ENCODE measurements at regions of chr12 and their contacts with region 1.

Region 1: GRCh38 chr12:9588749-9589148 is 19.0 kb downstream of the KLRB1 start:
- DNase-seq: no peak
- ATAC-seq: no peak
- H3K4me3 ChIP-seq: no peak overlapping the region
- H3K27ac ChIP-seq: no peak overlapping the region
- H3K4me1 ChIP-seq: no peaks in the 10 kb centered on the region
- H3K27me3 ChIP-seq: no peaks in the 10 kb centered on the region
- CTCF ChIP-seq: no peak
- POLR2A ChIP-seq: no peak
- RAD21 ChIP-seq: no peak

Region 2: DNA sequence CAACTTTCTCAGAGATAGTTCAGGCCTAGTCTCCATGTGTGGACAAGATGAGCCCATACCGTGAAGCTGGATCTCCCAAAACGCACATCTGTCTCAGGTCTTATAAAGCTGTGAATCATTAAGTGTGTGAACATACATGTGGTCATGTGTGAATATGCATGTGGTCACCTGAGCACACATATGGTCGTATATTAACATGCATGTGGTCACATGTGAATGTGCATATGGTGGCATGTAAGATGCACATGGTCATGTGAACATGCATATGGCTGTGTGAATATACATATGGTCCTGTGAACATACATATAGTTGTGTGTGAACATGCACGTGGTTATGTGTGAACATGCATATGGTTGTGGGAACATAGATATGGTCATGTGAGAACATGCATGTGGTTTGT is 208.1 kb before region 1 on chr12:
- CTCF ChIA-PET with region 1: no interaction called
- POLR2A ChIA-PET with region 1: interaction called, 10 read pairs
- dilution Hi-C with region 1: no loop called
- in situ Hi-C with region 1: no loop called
- intact Hi-C with region 1: no loop called
- DNase-seq: no peak
- ATAC-seq: no peak
- H3K4me3 ChIP-seq: no peak overlapping the region
- H3K27ac ChIP-seq: no peak overlapping the region
- H3K4me1 ChIP-seq: no peaks in the 10 kb centered on the region
- H3K27me3 ChIP-seq: peaks cover 5% of the 10 kb centered on the region; the same call in 1 of the 2 replicates
- CTCF ChIP-seq: no peak
- POLR2A ChIP-seq: no peak
- RAD21 ChIP-seq: no peak

Region 3: DNA sequence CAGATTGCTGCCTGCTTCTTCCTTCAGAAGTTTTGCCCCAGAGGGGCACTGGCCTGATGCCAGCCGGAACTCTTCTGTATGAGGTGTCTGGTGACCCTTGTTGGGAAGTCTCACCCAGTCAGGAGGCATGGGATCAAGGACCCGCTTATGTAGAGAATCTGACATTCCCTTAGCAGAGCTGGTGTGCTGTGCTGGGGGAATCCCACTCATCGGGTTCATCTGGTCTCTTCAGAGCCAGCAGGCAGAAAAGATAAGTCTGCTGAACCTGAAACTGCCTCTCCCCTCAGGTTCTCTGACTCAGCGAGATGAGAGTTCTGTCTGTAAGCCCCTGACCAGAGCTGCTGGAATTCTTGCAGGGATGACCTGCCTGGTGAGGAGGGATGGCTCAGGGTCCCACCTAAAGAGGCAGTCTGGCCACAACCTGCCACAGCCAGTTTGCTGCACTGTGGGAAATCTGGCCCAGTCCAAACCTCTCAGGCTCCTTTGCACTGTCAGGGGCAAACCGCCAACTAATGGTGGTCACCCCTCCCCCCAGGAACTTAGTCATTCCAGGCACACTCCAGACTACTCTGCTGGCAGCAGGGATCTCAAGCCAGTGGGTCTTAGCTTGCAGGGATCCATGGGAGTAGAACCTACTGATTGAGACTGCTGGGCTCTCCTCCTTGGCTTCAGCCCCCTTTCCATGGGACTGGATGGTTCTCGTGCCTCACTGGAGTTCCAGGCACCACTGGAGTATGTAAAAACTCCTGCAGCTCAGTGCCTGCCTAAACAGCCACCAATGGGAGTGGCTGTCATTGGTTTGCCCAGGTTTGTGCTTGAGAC is 84.9 kb after region 1 on chr12:
- CTCF ChIA-PET with region 1: no interaction called
- POLR2A ChIA-PET with region 1: no interaction called
- dilution Hi-C with region 1: no loop called
- in situ Hi-C with region 1: no loop called
- intact Hi-C with region 1: no loop called
- DNase-seq: peak; percentile 92
- ATAC-seq: peak; percentile 100
- H3K4me3 ChIP-seq: no peak overlapping the region
- H3K27ac ChIP-seq: no peak overlapping the region; the same call in 1 of the 2 replicates
- H3K4me1 ChIP-seq: peaks cover 10% of the 10 kb centered on the region
- H3K27me3 ChIP-seq: no peaks in the 10 kb centered on the region
- CTCF ChIP-seq: no peak
- POLR2A ChIP-seq: no peak
- RAD21 ChIP-seq: 0 out of 2 replicates have a peak, but pooled peaks have one; percentile 4

Region 4: DNA sequence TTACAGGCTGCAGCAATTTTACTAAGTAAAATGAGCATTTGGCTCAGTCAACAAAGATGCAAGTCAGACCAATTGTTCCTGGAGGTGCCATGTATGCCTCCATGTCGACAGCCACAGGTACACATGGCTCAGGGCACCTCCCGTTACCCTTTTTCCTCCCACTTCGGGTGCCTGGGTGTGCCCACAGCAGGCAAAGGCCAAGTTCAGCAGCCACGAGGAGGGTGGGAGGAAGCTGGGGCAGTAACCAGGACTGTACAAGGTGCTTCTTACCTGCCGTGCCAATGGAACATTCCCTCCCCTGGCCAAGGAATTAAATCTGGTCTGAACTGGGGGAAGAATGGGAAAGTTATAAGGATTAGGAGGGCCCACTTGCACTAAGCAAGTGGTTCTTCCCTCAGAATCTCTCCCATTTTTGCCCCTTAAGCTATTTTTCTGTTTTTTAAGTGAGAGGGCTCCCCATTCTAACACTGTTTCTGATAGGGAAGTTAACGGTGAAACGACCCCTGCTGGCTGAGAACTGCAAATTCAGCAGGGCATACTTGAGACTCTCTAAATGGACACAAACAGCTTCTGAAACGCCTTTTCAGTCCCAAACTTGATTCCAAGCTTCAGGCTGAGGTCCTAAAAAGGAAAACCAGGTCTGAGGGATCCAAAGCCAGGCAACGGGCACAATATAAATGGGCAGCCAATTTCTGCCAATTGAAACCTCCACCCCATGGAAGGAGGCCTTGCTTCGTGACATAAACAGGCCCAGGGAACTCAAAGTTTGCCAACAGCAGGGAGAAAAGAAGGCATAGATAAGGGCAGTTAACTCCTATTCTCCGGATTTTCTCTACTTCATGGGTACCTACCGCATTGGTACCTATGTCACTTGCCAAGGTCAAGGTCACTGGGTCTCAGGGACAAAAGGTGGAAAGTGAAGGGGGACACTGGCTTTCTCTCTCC is 119.4 kb after region 1 on chr12:
- CTCF ChIA-PET with region 1: no interaction called
- POLR2A ChIA-PET with region 1: no interaction called
- dilution Hi-C with region 1: no loop called
- in situ Hi-C with region 1: no loop called
- intact Hi-C with region 1: no loop called
- DNase-seq: peak; percentile 65
- ATAC-seq: peak; percentile 86
- H3K4me3 ChIP-seq: no peak overlapping the region
- H3K27ac ChIP-seq: no peak overlapping the region
- H3K4me1 ChIP-seq: no peaks in the 10 kb centered on the region
- H3K27me3 ChIP-seq: no peaks in the 10 kb centered on the region
- CTCF ChIP-seq: peak; percentile 79
- POLR2A ChIP-seq: no peak
- RAD21 ChIP-seq: peak; percentile 80